Activated naive CD4-positive, alpha-beta T cell treated with anti-CD3 and anti-CD28 coated beads, Interleukin-2, amount 10 ng/mL, durations not matched to agents 7 days and 5 days (primary cell): ENCODE measurements at regions of chr11 and their contacts with region 1.

Region 1: GRCh38 chr11:6667733-6668374 is 12.2 kb upstream of the DCHS1 start:
- DNase-seq: peak; percentile 35
- H3K4me3 Mint-ChIP-seq: no peak overlapping the region
- H3K27ac Mint-ChIP-seq: peak overlapping the region; percentile 40
- H3K4me1 Mint-ChIP-seq: peaks cover 61% of the 10 kb centered on the region
- H3K27me3 Mint-ChIP-seq: peaks cover 16% of the 10 kb centered on the region

Region 2: GRCh38 chr11:6619004-6619745 is 48.7 kb before region 1 on chr11 and contains the start of gene TPP1:
- CTCF ChIA-PET with region 1: interaction called, 13 read pairs
- DNase-seq: peak; percentile 94
- H3K4me3 Mint-ChIP-seq: no peak within 1 kb of the TSS
- H3K27ac Mint-ChIP-seq: no peak within 1 kb of the TSS
- H3K4me1 Mint-ChIP-seq: no peaks in the 10 kb centered on the region
- H3K27me3 Mint-ChIP-seq: no peaks in the 10 kb centered on the region